IMR-90 (cell line): ENCODE measurements at regions of chrX and their contacts with region 1.

Region 1: GRCh38 chrX:102067966-102068708 is 57.3 kb upstream of the TCEAL2 start:
- DNase-seq: peak; percentile 16
- ATAC-seq: 0 out of 2 replicates have a peak, but pooled peaks have one; percentile 40
- H3K4me3 ChIP-seq: no peak overlapping the region
- H3K27ac ChIP-seq: no peak overlapping the region
- H3K4me1 ChIP-seq: no peaks in the 10 kb centered on the region
- H3K27me3 ChIP-seq: no peaks in the 10 kb centered on the region
- CTCF ChIP-seq: peak; percentile 60
- POLR2A ChIP-seq: no peak
- RAD21 ChIP-seq: peak; percentile 60

Region 2: DNA sequence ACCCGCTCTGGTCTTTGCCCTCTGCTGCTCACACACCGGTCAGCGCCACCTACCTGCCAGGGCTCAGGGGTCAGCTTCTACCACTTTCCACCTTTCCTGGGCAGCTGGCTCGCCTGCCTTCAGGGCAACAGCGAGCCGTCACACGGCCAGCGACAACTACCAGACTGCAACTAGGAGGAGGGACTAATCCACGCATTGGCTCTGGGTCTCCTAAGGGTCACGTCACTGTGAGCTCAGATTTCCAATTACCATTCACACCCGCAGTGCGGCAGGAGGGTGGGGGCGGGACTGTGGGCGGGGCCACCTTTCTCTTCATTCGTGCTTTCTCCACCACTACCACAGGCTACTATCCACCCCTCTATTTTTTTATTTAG is 87.7 kb after region 1 on chrX and contains the start of gene BEX5:
- CTCF ChIA-PET with region 1: no interaction called
- POLR2A ChIA-PET with region 1: no interaction called
- dilution Hi-C with region 1: no loop called
- in situ Hi-C with region 1: no loop called
- intact Hi-C with region 1: no loop called
- DNase-seq: no peak
- ATAC-seq: no peak
- H3K4me3 ChIP-seq: no peak within 1 kb of the TSS
- H3K27ac ChIP-seq: no peak within 1 kb of the TSS
- H3K4me1 ChIP-seq: no peaks in the 10 kb centered on the region
- H3K27me3 ChIP-seq: peaks cover 2% of the 10 kb centered on the region; the same call in 1 of the 2 replicates
- CTCF ChIP-seq: no peak
- POLR2A ChIP-seq: no peak
- RAD21 ChIP-seq: no peak
- total RNA-seq, gene BEX5: not detected in 2 replicates

Region 3: DNA sequence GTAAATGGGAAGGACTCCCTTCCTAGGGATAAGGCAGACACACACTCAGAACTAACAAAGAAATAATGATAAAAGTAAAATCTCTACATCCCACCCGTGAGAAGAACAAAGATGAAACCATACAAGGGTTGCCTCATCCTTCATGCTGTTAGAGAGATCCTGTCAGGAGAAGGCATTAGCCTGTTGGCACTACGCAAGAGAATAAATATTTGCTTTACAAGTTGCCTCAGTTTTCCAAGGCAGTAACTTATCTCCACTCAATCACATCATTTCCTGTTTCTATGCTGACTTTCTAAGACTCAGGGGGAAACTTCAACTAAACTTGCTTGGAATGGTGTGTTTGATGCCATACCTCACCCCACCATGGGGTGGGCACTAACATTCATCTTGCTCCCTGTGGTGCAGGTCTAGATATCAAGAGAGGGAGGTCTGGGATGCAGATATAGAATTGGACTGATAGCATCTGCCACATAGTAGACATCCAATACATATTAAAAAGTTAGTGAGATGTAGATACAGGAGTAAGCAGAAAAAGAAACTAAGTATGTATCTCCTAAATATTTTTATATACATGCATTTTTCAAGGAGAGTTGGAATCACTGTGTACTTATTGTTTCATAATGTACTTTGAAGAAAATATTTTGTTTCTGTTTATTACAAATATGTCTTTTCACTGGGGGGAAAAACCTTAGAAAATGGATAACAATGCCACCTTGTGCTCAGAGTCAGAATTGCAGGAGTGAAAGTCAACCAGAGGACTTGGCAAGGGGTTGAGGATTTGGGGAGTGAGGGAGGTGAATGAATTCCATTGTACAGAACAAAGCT is 1089.6 kb after region 1 on chrX:
- CTCF ChIA-PET with region 1: no interaction called
- POLR2A ChIA-PET with region 1: no interaction called
- dilution Hi-C with region 1: no loop called
- in situ Hi-C with region 1: no loop called
- intact Hi-C with region 1: loop called (anchors 10 kb)
- DNase-seq: peak; percentile 27
- ATAC-seq: peak; percentile 75
- H3K4me3 ChIP-seq: no peak overlapping the region
- H3K27ac ChIP-seq: no peak overlapping the region
- H3K4me1 ChIP-seq: no peaks in the 10 kb centered on the region
- H3K27me3 ChIP-seq: peaks cover 4% of the 10 kb centered on the region
- CTCF ChIP-seq: peak; percentile 59
- POLR2A ChIP-seq: no peak
- RAD21 ChIP-seq: peak; percentile 31; the same call in 1 of the 2 replicates

Region 4: GRCh38 chrX:103175944-103176753 is 1108.0 kb after region 1 on chrX:
- CTCF ChIA-PET with region 1: no interaction called
- POLR2A ChIA-PET with region 1: no interaction called
- dilution Hi-C with region 1: no loop called
- in situ Hi-C with region 1: no loop called
- intact Hi-C with region 1: loop called (anchors 5 kb)
- DNase-seq: peak; percentile 38
- ATAC-seq: peak; percentile 91
- H3K4me3 ChIP-seq: no peak overlapping the region
- H3K27ac ChIP-seq: no peak overlapping the region
- H3K4me1 ChIP-seq: no peaks in the 10 kb centered on the region
- H3K27me3 ChIP-seq: peaks cover 10% of the 10 kb centered on the region; the same call in 1 of the 2 replicates
- CTCF ChIP-seq: peak; percentile 73
- POLR2A ChIP-seq: no peak
- RAD21 ChIP-seq: peak; percentile 63